ENCODE measurements at regions of chr22 and their contacts with region 1.

Region 1: GRCh38 chr22:26172389-26172990 is 3.2 kb downstream of the SEZ6L start:
- DNase-seq: peak; percentile 17 to 58
- ATAC-seq: peak; percentile 56 to 73 (median 64)
- H3K4me3 ChIP-seq: no peak overlapping the region
- H3K27ac ChIP-seq: no peak overlapping the region
- H3K4me1 ChIP-seq: peaks cover 5% of the 10 kb centered on the region
- H3K27me3 ChIP-seq: peaks cover 0 to 58% (median 15%) of the 10 kb centered on the region in 3 donors
- CTCF ChIP-seq: peak; percentile 62

Region 2: DNA sequence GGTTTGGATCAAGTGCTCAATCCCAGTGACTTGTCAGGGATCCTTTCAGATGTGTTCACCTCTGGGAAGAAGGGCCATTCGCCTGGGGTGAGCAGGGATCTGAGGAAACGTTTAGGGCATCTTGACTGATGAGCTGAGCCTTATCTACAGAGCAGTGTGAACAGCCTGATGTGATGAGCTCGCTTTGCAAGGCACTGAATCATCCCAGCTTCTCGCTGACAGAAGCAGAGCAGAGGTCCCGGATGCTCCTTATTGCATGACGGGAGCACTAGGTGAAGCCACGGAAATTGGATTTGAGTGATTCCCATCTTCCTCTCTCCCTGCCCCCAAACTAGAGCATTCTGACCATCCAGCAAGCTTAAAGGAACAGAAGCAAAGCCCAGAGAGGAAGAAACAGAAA is 43.2 kb after region 1 on chr22:
- intact Hi-C with region 1: no loop called
- DNase-seq: no peak
- ATAC-seq: no peak
- H3K4me3 ChIP-seq: no peak overlapping the region
- H3K27ac ChIP-seq: no peak overlapping the region
- H3K4me1 ChIP-seq: no peaks in the 10 kb centered on the region
- H3K27me3 ChIP-seq: peaks cover 0 to 3% (median 0%) of the 10 kb centered on the region in 3 donors
- CTCF ChIP-seq: no peak

Region 3: DNA sequence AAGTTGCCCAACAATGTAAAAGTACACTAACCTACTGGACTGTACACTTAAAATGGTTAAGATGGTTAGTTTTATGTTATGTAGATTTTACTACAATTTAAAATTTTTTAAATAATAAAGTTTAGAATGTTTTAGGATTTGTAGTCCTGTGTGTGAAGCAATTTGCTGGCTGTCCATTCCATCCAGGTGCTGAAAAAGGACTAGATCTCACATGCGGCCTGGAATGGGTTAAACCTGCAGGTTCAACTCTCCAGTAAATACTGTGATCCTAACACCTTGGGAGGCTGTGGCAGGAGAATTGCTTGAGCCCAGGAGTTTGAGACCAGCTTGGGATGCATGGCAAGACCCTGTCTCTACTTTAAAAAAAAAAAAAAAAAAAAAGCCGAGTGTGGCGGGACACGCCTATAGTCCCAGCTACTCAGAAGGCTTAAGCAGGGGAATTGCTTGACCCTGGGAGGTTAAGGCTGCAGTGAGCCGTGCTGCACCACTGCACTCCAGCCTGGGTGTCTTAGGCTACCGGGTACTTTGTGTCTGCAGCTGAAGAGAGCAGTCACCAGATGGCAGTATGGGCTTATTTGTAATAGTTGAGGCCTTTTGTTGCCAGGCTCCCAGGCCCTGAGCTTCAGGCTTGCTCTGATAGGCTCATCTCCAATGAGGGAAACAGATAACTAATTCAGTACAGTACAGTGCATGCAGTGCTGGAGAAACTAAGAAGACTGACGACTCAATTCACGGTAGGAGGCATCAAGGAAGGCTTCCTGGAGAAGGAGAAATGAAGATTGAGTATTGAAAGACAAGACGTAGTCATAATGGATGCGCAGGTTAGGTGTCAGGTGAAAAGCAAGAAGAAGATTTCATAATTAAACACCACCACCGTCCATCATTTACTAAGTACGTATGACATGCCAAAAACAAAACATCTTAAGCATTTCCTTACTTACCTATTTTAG is 191.9 kb after region 1 on chr22:
- intact Hi-C with region 1: loop called in 1 of 2 experiments (anchors 1 kb)
- DNase-seq: peak; percentile 26 to 62
- ATAC-seq: peak; percentile 71 to 83 (median 78)
- H3K4me3 ChIP-seq: no peak overlapping the region
- H3K27ac ChIP-seq: no peak overlapping the region
- H3K4me1 ChIP-seq: peaks cover 8% of the 10 kb centered on the region
- H3K27me3 ChIP-seq: peaks cover 0 to 4% (median 0%) of the 10 kb centered on the region in 3 donors
- CTCF ChIP-seq: peak; percentile 69

Measured in psoas muscle (tissue), 8 donors.